Calu3 (cell line): ENCODE measurements at regions of chr18 and their contacts with region 1.

Region 1: GRCh38 chr18:76982841-76983587 is 149.6 kb downstream of the MBP start:
- DNase-seq: peak; percentile 99
- H3K4me3 Mint-ChIP-seq: peak overlapping the region; percentile 42
- H3K27ac Mint-ChIP-seq: no peak overlapping the region
- H3K4me1 Mint-ChIP-seq: peaks cover 7% of the 10 kb centered on the region
- H3K27me3 Mint-ChIP-seq: no peaks in the 10 kb centered on the region
- CTCF ChIP-seq: peak; percentile 100

Region 2: GRCh38 chr18:76480913-76481312 is 502.1 kb before region 1 on chr18:
- CTCF ChIA-PET with region 1: no interaction called
- intact Hi-C with region 1: no loop called
- DNase-seq: no peak
- H3K4me3 Mint-ChIP-seq: no peak overlapping the region
- H3K27ac Mint-ChIP-seq: no peak overlapping the region
- H3K4me1 Mint-ChIP-seq: peaks cover 22% of the 10 kb centered on the region
- H3K27me3 Mint-ChIP-seq: no peaks in the 10 kb centered on the region
- CTCF ChIP-seq: peak; percentile 34

Region 3: DNA sequence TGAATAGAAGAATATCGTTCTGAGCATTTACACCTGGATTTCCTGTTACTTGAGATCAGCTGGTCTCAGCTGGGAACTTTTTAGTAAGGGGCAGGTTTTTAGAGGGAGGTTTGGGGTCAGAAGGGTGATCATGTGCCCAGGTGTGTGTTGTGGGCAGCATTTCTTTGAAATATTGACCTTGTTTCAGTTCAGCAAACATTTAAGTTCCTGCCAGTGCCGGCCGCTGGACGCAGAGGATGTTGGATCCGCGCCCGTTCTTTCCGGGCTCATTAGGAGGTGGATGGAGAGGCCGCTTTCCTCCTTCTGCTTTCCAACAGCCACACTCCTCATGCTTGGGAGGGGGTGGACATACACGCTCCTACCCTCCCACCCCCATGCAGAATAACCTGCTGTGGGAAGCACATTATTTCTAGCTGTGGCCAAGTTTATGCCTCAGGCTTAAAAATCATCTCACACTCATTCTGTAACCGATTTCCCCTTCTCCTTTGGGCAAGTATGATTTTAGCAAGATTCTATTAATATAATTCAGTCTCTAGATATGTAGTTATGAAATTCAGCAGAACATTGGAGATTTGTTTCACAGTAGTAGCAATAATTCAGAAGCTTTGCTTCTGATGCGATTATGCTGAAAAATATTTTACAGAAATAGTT is 29.3 kb before region 1 on chr18:
- CTCF ChIA-PET with region 1: interaction called, 6 read pairs
- intact Hi-C with region 1: loop called (anchors 1 kb)
- DNase-seq: peak; percentile 71
- H3K4me3 Mint-ChIP-seq: peak overlapping the region; percentile 12
- H3K27ac Mint-ChIP-seq: no peak overlapping the region
- H3K4me1 Mint-ChIP-seq: peaks cover 21% of the 10 kb centered on the region
- H3K27me3 Mint-ChIP-seq: peaks cover 41% of the 10 kb centered on the region
- CTCF ChIP-seq: no peak

Region 4: DNA sequence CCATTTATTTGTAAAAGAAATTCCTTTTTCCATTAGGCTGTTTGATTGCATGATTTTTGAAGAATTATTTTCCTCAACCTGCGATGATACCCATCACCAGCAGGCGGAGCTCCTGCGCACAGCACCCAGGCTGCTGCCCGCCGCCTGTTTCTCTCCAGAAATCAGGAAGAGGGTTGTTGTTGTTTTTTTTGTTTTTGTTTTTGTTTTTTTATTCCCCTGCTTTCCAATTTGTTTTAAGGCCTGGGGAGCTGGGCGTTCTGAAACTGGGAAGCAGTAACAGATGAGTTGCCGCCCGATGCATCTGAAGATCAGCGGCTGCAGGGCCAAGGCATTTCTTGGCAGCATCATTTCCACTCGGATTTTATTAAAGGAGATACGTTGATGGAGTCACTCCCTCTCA is 17.5 kb after region 1 on chr18:
- CTCF ChIA-PET with region 1: interaction called, 10 read pairs
- intact Hi-C with region 1: no loop called
- DNase-seq: peak; percentile 82
- H3K4me3 Mint-ChIP-seq: no peak overlapping the region
- H3K27ac Mint-ChIP-seq: no peak overlapping the region
- H3K4me1 Mint-ChIP-seq: no peaks in the 10 kb centered on the region
- H3K27me3 Mint-ChIP-seq: no peaks in the 10 kb centered on the region
- CTCF ChIP-seq: peak; percentile 100

Region 5: DNA sequence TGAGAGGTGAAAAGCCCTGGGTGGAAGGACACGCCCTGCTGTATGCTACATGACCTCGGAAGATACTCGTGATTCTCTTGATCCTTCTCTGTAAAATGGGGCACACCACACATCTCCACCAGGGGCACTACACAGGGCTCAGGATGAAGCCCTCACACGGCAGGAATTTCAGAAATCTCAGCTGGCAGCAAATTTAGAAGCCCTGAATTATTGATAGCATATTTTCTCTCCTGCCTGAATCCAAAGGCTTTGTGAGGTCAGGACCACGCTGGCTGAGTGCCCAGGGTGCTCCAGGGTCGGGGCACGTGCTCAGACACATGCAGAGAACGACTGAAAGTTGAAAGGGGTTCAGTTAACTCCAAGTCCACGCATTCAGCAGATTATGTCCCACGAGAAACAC is 224.5 kb after region 1 on chr18:
- CTCF ChIA-PET with region 1: interaction called, 10 read pairs
- intact Hi-C with region 1: loop called (anchors 1 kb)
- DNase-seq: peak; percentile 87
- H3K4me3 Mint-ChIP-seq: no peak overlapping the region
- H3K27ac Mint-ChIP-seq: no peak overlapping the region
- H3K4me1 Mint-ChIP-seq: peaks cover 20% of the 10 kb centered on the region
- H3K27me3 Mint-ChIP-seq: peaks cover 27% of the 10 kb centered on the region
- CTCF ChIP-seq: peak; percentile 98

Region 6: DNA sequence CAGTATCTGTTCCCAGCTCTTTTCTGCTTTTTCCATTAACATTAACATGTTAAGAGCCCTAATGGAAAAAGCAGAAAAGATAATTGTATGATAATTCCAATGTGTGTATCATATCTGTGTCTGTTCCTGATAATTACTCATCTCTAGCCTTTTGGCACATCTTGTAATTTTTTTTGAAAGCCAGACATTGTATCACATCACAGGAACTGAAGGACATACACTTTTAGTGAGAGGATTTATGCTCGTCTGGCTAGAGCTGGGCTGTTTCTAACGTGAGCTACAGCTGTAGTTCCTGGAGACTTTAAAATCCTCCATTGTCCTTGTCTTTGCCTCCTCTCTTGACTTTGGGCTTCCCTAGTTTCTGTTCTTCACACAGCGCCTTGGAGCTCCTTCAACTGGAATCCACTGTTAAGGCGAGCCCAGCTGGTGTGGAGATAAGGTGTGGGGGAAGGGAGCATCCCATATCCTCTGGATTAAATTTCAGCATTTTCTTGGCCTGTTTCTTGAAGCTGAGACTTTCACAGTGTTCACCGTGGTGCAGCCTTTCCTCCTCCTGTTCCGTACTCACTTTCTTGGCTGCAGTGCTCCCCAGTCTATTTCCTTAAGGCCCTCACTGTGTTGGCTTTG is 478.2 kb after region 1 on chr18:
- CTCF ChIA-PET with region 1: no interaction called
- intact Hi-C with region 1: loop called (anchors 10 kb)
- DNase-seq: no peak
- H3K4me3 Mint-ChIP-seq: no peak overlapping the region
- H3K27ac Mint-ChIP-seq: no peak overlapping the region
- H3K4me1 Mint-ChIP-seq: no peaks in the 10 kb centered on the region
- H3K27me3 Mint-ChIP-seq: no peaks in the 10 kb centered on the region
- CTCF ChIP-seq: no peak